Activated T-helper 1 cell treated with anti-CD3 and anti-CD28 coated beads, Interleukin-12 subunit alpha, Interleukin-12 subunit beta, Interleukin-2, Interleukin-4 antibody, amounts not matched to agents 30 ng/mL and 10 ng/mL and 1 ng/mL, durations not matched to agents 14 hours and 24 hours and 36 hours (primary cell): ENCODE measurements at regions of chr3 and their contacts with region 1.

Region 1: GRCh38 chr3:93979833-93980676 is at the start of gene ARL13B:
- DNase-seq: peak; percentile 93
- H3K4me3 Mint-ChIP-seq: peak within 1 kb of the TSS; percentile 92
- H3K27ac Mint-ChIP-seq: peak within 1 kb of the TSS; percentile 86
- H3K4me1 Mint-ChIP-seq: peaks cover 29% of the 10 kb centered on the region
- H3K27me3 Mint-ChIP-seq: peaks cover 2% of the 10 kb centered on the region
- total RNA-seq, gene ARL13B: 14.7 and 15.9 TPM in 2 replicates

Region 2: GRCh38 chr3:94024385-94024784 is 44.3 kb after region 1 on chr3:
- intact Hi-C with region 1: no loop called
- DNase-seq: no peak
- H3K4me3 Mint-ChIP-seq: no peak overlapping the region
- H3K27ac Mint-ChIP-seq: no peak overlapping the region
- H3K4me1 Mint-ChIP-seq: no peaks in the 10 kb centered on the region
- H3K27me3 Mint-ChIP-seq: no peaks in the 10 kb centered on the region

Region 3: GRCh38 chr3:94062431-94063404 is 82.7 kb after region 1 on chr3 and contains the starts of genes DHFR2 and NSUN3:
- intact Hi-C with region 1: loop called (anchors 1 kb)
- DNase-seq: peak; percentile 82
- H3K4me3 Mint-ChIP-seq: peak within 1 kb of the TSS; percentile 98
- H3K27ac Mint-ChIP-seq: peak within 1 kb of the TSS; percentile 97
- H3K4me1 Mint-ChIP-seq: peaks cover 47% of the 10 kb centered on the region
- H3K27me3 Mint-ChIP-seq: no peaks in the 10 kb centered on the region
- total RNA-seq, gene DHFR2: 10.1 and 12.3 TPM in 2 replicates
- total RNA-seq, gene NSUN3: 18.8 and 19.7 TPM in 2 replicates